Activated CD8-positive, alpha-beta T cell treated with anti-CD3 and anti-CD28 coated beads for 36 hours (primary cell): ENCODE measurements at regions of chr1 and their contacts with region 1.

Region 1: DNA sequence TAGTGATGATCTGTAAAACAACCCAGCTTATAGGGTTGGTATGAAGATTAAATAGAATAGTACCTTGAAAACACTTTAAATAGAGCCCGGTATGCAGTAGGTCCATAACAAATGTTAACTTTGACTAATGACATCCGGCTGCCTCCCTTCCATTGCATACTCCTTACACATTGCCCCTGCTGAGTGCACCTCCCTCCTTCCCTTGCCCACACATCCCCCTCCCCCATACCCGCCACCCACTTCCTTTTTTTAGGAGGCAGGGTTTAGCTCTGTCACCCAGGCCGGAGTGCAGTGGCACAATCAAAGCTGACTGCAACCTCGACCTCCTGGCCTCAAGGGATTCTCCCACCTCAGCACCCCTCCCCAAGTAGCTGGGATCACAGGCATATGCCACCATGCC is 24.4 kb upstream of the ZC3H12A start:
- DNase-seq: peak; percentile 69
- ATAC-seq: peak; percentile 73
- H3K4me3 Mint-ChIP-seq: no peak overlapping the region
- H3K27ac Mint-ChIP-seq: peak overlapping the region; percentile 5
- H3K4me1 Mint-ChIP-seq: peaks cover 11% of the 10 kb centered on the region
- H3K27me3 Mint-ChIP-seq: no peaks in the 10 kb centered on the region
- CTCF ChIP-seq: no peak

Region 2: DNA sequence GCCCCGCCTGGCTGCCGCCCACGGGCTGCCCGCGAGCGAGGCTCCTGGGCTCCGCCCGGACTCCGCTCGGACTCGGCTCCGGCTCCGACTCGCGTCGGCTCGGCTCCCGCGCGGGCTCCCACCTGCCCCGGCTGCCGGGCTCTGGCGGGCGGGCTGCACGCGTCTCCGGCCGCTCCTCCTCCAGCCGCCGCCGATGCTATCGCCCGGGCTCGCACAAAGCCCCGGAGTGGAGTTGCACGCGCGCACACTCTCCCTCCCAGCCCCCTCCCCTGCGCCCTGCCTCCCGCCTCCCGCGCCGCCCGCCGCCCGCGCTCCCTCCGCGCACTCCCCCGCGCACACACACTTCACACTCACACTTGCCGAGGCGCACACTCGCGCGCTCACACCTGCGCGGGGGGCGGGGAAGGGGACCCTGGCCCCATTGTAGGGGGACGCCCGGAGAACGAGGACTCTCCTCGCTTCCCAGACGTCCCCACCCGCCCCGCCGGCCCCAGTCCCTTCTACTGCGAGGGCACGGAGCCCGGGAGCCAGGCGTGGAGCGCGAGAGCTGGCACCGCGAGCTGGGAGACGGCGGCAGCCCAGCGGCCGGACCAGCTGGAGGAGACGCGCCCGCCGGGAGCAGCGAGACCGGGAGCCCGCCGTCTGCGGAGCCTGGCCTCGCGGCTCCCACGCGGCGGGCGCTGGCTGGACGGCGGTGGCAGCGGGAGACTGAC is 415.5 kb before region 1 on chr1 and contains the start of gene GRIK3:
- CTCF ChIA-PET with region 1: no interaction called
- POLR2A ChIA-PET with region 1: no interaction called
- intact Hi-C with region 1: no loop called
- DNase-seq: no peak
- ATAC-seq: no peak
- H3K4me3 Mint-ChIP-seq: no peak within 1 kb of the TSS
- H3K27ac Mint-ChIP-seq: no peak within 1 kb of the TSS
- H3K4me1 Mint-ChIP-seq: peaks cover 11% of the 10 kb centered on the region
- H3K27me3 Mint-ChIP-seq: peaks cover 65% of the 10 kb centered on the region
- CTCF ChIP-seq: no peak
- total RNA-seq, gene GRIK3: not detected

Region 3: DNA sequence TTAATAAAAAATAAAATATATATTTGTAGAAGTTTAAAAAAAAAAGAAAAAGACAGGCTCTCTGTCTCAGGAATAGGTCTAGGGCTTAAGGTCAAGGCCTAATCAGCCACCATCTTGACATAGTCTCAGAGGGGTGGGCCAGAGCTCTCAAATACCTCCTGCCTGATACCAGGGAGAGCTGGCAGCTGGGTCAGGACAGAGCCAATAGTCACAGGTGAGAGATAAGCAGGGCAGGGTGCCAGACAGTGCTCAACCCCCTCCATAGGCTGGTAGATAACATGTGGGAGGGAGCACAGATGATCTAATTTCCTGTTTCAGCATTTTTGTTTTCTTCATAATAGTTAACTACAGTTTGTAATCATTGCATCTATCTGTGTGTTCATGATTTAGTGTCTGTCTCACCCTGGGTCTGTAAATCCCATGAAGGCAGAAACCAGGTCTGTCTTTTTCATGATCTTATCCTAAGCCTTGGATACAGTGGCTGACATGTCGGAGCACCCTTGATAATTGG is 263.6 kb before region 1 on chr1:
- CTCF ChIA-PET with region 1: no interaction called
- POLR2A ChIA-PET with region 1: no interaction called
- intact Hi-C with region 1: no loop called
- DNase-seq: no peak
- ATAC-seq: no peak
- H3K4me3 Mint-ChIP-seq: no peak overlapping the region
- H3K27ac Mint-ChIP-seq: no peak overlapping the region
- H3K4me1 Mint-ChIP-seq: no peaks in the 10 kb centered on the region
- H3K27me3 Mint-ChIP-seq: peaks cover 22% of the 10 kb centered on the region
- CTCF ChIP-seq: no peak

Region 4: GRCh38 chr1:37403170-37403569 is 46.8 kb before region 1 on chr1:
- CTCF ChIA-PET with region 1: no interaction called
- POLR2A ChIA-PET with region 1: no interaction called
- intact Hi-C with region 1: no loop called
- DNase-seq: no peak
- ATAC-seq: no peak
- H3K4me3 Mint-ChIP-seq: no peak overlapping the region
- H3K27ac Mint-ChIP-seq: no peak overlapping the region
- H3K4me1 Mint-ChIP-seq: peaks cover 5% of the 10 kb centered on the region
- H3K27me3 Mint-ChIP-seq: peaks cover 4% of the 10 kb centered on the region
- CTCF ChIP-seq: no peak

Region 5: DNA sequence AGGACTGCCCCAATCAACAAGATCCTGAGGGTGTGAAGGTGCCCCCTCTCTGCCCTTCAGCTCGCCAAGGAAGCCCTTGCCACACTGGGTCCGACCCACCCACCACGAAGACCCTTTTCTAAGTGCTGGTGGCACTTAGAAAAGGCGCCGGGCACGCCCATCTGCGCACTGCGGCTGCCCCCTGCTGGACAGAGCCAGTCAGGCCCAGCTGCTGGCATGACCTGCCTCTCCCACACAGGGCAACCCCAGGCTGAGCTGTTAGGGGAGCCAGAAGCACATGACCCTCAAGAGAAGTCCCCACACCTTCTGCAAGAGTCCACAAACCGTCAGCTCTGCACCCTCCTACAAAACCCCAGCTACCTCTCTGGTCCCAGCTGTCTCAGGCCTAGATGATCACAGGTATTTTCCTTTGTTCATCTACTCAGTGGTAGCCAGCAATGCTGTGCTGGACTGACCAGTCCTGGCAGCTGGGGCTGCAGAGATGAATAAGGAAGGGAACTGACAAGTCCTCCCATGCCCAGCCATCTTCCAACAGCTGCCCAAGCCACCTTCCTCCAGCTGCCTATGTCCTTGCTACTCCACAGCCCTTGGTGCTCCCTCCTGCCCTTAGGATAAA is 15.5 kb before region 1 on chr1:
- CTCF ChIA-PET with region 1: interaction called, 18 read pairs
- POLR2A ChIA-PET with region 1: no interaction called
- intact Hi-C with region 1: no loop called
- DNase-seq: peak; percentile 80
- ATAC-seq: peak; percentile 98
- H3K4me3 Mint-ChIP-seq: no peak overlapping the region
- H3K27ac Mint-ChIP-seq: no peak overlapping the region
- H3K4me1 Mint-ChIP-seq: no peaks in the 10 kb centered on the region
- H3K27me3 Mint-ChIP-seq: peaks cover 14% of the 10 kb centered on the region
- CTCF ChIP-seq: peak; percentile 89

Region 6: DNA sequence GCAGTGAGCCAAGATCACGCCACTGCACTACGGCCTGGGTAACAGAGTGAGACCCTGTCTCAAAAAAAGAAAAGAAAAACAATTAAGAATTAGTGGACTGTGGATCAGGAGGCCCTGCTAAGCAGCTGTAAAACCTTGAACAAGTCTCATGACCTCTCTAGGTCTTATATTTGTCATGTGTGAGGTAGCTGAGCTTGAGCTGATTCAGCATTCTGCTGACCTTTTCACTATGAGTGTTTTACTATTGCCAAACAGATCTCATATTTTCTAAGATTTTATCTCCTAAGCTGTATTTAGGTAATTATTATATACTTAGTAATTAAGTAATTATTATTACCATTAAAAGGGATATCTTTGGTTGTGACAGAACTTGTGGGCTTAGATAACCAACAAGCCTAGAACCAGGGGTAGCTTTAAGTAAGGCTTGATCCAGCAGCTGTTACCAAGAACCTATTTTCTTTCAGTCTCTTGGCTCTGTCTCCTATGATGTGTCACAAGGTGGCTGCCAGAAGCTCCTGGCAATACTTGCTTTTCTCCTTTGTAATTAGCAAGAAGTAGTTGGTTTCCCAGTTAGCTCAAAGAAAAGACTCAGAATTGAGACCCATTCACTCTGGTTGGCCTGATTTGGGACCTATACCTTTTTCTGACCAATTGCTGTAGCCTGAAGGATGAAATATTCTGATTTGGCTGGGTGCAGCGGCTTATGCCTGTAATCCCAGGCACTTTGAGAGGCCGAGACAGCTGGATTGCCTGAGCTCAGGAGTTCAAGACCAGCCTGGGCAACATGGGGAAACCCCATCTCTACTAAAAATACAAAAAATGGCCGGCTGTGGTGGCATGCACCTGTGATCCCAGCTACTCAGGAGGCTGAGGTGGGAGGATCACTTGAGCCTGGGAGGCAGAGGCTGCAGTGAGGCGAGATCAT is 15.9 kb after region 1 on chr1:
- CTCF ChIA-PET with region 1: interaction called, 41 read pairs
- POLR2A ChIA-PET with region 1: interaction called, 4 read pairs
- intact Hi-C with region 1: no loop called
- DNase-seq: no peak
- ATAC-seq: no peak
- H3K4me3 Mint-ChIP-seq: no peak overlapping the region
- H3K27ac Mint-ChIP-seq: no peak overlapping the region
- H3K4me1 Mint-ChIP-seq: peaks cover 14% of the 10 kb centered on the region
- H3K27me3 Mint-ChIP-seq: no peaks in the 10 kb centered on the region
- CTCF ChIP-seq: no peak

Region 7: GRCh38 chr1:37479255-37480124 is 29.6 kb after region 1 on chr1:
- CTCF ChIA-PET with region 1: interaction called, 380 read pairs
- POLR2A ChIA-PET with region 1: interaction called, 7 read pairs
- intact Hi-C with region 1: no loop called
- DNase-seq: peak; percentile 97
- ATAC-seq: peak; percentile 60
- H3K4me3 Mint-ChIP-seq: peak overlapping the region; percentile 90
- H3K27ac Mint-ChIP-seq: peak overlapping the region; percentile 99
- H3K4me1 Mint-ChIP-seq: peaks cover 27% of the 10 kb centered on the region
- H3K27me3 Mint-ChIP-seq: no peaks in the 10 kb centered on the region
- CTCF ChIP-seq: no peak

Region 8: GRCh38 chr1:37514350-37515184 is 64.6 kb after region 1 on chr1 and contains the start of gene MEAF6:
- CTCF ChIA-PET with region 1: interaction called, 11 read pairs
- POLR2A ChIA-PET with region 1: no interaction called
- intact Hi-C with region 1: no loop called
- DNase-seq: peak; percentile 84
- ATAC-seq: peak; percentile 91
- H3K4me3 Mint-ChIP-seq: peak within 1 kb of the TSS; percentile 98
- H3K27ac Mint-ChIP-seq: peak within 1 kb of the TSS; percentile 96
- H3K4me1 Mint-ChIP-seq: peaks cover 42% of the 10 kb centered on the region
- H3K27me3 Mint-ChIP-seq: no peaks in the 10 kb centered on the region
- CTCF ChIP-seq: peak; percentile 70
- total RNA-seq, gene MEAF6: 74.0 to 76.3 TPM